Natural killer cell (primary cell): ENCODE measurements at regions of chr11 and their contacts with region 1.

Region 1: DNA sequence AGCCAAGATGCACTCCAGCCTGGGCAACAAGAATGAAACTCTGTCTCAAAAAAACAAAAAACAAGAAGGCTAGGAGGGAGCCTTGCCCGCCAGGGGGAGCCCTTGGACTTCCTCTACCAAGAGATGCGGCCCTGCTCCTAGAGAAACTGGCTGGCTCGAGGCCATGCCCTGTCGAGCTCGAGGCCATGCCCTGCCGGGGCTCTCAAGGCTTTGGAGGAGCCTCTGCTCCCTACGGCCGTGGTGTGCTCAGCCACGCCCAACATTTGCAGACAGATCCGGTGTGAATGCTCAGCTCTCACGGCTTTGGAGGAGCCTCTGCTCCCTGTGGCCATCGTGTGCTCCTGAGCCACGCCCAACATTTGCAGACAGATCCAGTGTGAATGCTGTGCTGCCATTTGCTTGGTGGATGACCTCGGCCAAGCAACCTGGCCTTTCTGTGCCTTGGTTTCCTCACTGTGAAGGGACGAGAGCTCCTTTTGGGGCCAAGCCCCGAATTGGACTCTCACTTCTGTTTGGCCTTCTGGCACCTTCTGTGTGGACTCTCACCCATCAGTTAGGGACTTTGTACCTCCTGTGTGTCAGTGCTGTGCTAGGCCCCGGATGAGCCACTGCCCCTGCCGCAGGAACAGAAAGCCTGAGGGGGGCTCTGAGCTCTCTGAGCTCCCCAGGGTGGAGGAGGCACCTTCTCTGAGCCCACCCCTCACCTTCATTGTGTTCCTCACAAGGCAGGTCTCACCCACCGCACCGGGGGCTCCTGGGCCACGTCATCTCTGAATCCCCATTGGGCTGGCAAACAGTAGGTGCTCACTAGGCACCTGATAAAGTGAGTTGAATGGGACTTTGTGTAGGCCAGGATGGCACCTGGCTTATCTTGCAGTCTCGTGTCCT is 14.1 kb downstream of the C11orf24 start:
- DNase-seq: peak; percentile 93 to 94
- ATAC-seq: peak; percentile 90 to 98 (median 98)
- H3K4me3 ChIP-seq: no peak overlapping the region
- H3K4me3 Mint-ChIP-seq: no peak overlapping the region
- H3K27ac ChIP-seq: no peak overlapping the region
- H3K27ac Mint-ChIP-seq: no peak overlapping the region
- H3K4me1 ChIP-seq: peaks cover 11% of the 10 kb centered on the region
- H3K4me1 Mint-ChIP-seq: peaks cover 0 to 5% of the 10 kb centered on the region in 2 donors
- H3K27me3 ChIP-seq: no peaks in the 10 kb centered on the region
- H3K27me3 Mint-ChIP-seq: no peaks in the 10 kb centered on the region
- CTCF ChIP-seq: peak; percentile 85

Region 2: GRCh38 chr11:68297812-68298658 is 40.3 kb after region 1 on chr11:
- intact Hi-C with region 1: loop called (anchors 1 kb)
- DNase-seq: peak; percentile 80 to 82
- ATAC-seq: peak; percentile 92 to 100 (median 100)
- H3K4me3 ChIP-seq: no peak overlapping the region
- H3K4me3 Mint-ChIP-seq: no peak overlapping the region
- H3K27ac ChIP-seq: no peak overlapping the region
- H3K27ac Mint-ChIP-seq: no peak overlapping the region
- H3K4me1 ChIP-seq: peaks cover 10% of the 10 kb centered on the region
- H3K4me1 Mint-ChIP-seq: no peaks in the 10 kb centered on the region
- H3K27me3 ChIP-seq: peaks cover 4% of the 10 kb centered on the region
- H3K27me3 Mint-ChIP-seq: no peaks in the 10 kb centered on the region
- CTCF ChIP-seq: peak; percentile 98

Region 3: DNA sequence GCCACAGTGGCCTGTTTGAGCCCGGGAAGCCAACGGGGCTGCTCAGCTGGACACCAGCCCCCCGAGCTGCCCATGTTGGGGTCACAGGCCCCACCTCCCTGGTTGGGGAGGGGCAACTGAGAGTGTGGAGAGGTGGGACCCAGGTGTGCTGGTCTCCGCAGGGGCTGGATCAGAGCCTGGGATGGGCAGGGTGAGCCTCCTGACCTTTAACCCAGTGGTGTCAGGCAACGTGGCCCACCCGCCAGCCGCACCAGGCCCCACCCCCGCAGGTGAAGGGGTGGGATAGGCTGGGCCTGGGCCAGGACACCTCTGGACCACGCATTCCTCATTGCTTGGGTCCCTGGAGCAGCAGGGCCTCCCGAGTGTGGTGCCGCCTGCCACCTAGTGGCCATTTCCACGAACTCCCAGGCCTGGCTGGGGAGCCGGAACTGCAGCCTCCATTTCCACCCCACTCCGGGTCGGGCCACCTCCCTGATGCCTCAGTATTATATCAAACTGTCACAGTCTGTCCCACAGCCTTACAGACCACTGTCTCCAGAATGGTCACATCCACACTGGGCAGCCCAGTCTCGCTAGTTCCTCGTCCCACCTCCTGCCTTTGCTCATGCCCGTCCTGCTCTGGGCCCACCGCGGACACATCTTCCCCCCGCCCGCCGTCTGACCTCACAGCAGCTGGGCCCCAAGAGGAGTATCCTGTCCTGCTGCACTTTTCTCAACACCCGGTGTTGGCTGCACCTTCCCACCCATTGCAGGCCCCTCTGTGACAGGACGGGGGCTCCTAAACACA is 189.5 kb after region 1 on chr11:
- intact Hi-C with region 1: loop called (anchors 1 kb)
- DNase-seq: peak; percentile 70 to 87
- ATAC-seq: peak; percentile 85 to 100 (median 99)
- H3K4me3 ChIP-seq: no peak overlapping the region
- H3K4me3 Mint-ChIP-seq: no peak overlapping the region
- H3K27ac ChIP-seq: no peak overlapping the region
- H3K27ac Mint-ChIP-seq: peak overlapping the region in 1 of 2 donors; percentile 53
- H3K4me1 ChIP-seq: peaks cover 8% of the 10 kb centered on the region
- H3K4me1 Mint-ChIP-seq: peaks cover 4 to 7% of the 10 kb centered on the region in 2 donors
- H3K27me3 ChIP-seq: no peaks in the 10 kb centered on the region
- H3K27me3 Mint-ChIP-seq: no peaks in the 10 kb centered on the region
- CTCF ChIP-seq: peak; percentile 93

Region 4: GRCh38 chr11:69530278-69531070 is 1272.8 kb after region 1 on chr11:
- intact Hi-C with region 1: no loop called
- DNase-seq: no peak
- ATAC-seq: peak in 1 of 3 donors; percentile 45
- H3K4me3 ChIP-seq: no peak overlapping the region
- H3K4me3 Mint-ChIP-seq: no peak overlapping the region
- H3K27ac ChIP-seq: no peak overlapping the region
- H3K27ac Mint-ChIP-seq: no peak overlapping the region
- H3K4me1 ChIP-seq: peaks cover 21% of the 10 kb centered on the region
- H3K4me1 Mint-ChIP-seq: peaks cover 0 to 10% of the 10 kb centered on the region in 2 donors
- H3K27me3 ChIP-seq: no peaks in the 10 kb centered on the region
- H3K27me3 Mint-ChIP-seq: peaks cover 19 to 30% of the 10 kb centered on the region in 2 donors
- CTCF ChIP-seq: no peak